OCI-LY7 (cell line): ENCODE measurements at regions of chr7 and their contacts with region 1.

Region 1: GRCh38 chr7:39948956-39949928 is 814 bp upstream of the CDK13 start:
- DNase-seq: peak; percentile 98
- H3K4me3 ChIP-seq: peak overlapping the region; percentile 97
- H3K27ac ChIP-seq: peak overlapping the region; percentile 100
- H3K4me1 ChIP-seq: peaks cover 27% of the 10 kb centered on the region
- CTCF ChIP-seq: no peak

Region 2: DNA sequence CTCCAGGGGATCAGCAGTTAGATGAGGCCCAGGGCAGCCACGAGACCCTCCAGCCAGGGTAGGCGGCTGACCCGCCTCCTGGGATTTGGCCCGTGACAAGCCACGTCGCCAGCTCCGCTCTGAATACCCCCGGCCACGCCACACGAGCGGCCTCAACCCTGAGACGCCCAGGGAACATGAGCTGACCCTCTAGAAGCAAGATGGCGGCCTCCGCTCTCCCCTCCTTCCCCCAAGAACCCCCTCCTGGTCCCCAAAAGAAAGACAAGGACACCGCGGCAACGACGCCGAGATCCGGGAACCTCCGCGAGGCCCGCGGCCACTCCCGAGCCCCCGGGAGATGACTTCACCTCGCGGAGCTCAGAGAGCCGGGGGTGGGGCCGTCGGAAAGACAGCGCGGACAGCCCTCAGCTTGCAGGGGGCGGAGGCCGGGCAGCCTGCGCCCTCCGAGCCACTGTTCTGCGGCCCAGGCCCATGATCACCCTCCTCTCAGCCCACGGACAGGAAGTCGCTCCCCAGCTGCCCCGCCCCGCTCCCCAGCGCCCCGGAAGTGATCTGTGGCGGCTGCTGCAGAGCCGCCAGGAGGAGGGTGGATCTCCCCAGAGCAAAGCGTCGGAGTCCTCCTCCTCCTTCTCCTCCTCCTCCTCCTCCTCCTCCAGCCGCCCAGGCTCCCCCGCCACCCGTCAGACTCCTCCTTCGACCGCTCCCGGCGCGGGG is 326.1 kb before region 1 on chr7 and contains the start of gene RALA:
- CTCF ChIA-PET with region 1: no interaction called
- POLR2A ChIA-PET with region 1: interaction called, 6 read pairs
- intact Hi-C with region 1: loop called (anchors 2 kb)
- DNase-seq: peak; percentile 87
- H3K4me3 ChIP-seq: peak within 1 kb of the TSS; percentile 86
- H3K27ac ChIP-seq: peak within 1 kb of the TSS; percentile 17
- H3K4me1 ChIP-seq: peaks cover 27% of the 10 kb centered on the region
- CTCF ChIP-seq: no peak
- total RNA-seq, gene RALA: 5.7 and 6.4 TPM in 2 replicates

Region 3: DNA sequence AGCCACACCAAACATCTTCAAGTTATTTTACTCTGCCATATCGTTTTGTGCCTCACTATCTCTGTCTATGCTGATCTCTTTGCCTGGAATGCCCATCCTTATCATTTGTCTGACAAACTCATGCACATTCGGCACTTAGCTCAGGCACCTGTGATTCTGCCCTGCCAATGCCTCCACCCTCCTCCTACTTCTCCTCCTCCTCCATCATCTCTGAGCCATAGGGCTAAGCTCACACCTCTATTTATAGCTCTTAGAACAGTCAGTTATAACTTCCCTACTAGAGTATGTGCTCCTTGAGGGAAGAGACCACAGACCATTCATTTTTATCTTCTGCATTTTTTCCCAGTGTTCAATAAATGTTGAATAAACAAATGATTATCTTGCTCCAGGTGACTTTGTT is 50.4 kb before region 1 on chr7:
- CTCF ChIA-PET with region 1: no interaction called
- POLR2A ChIA-PET with region 1: interaction called, 6 read pairs
- intact Hi-C with region 1: loop called (anchors 2 kb)
- DNase-seq: no peak
- H3K4me3 ChIP-seq: no peak overlapping the region
- H3K27ac ChIP-seq: no peak overlapping the region
- H3K4me1 ChIP-seq: no peaks in the 10 kb centered on the region
- CTCF ChIP-seq: no peak

Region 4: DNA sequence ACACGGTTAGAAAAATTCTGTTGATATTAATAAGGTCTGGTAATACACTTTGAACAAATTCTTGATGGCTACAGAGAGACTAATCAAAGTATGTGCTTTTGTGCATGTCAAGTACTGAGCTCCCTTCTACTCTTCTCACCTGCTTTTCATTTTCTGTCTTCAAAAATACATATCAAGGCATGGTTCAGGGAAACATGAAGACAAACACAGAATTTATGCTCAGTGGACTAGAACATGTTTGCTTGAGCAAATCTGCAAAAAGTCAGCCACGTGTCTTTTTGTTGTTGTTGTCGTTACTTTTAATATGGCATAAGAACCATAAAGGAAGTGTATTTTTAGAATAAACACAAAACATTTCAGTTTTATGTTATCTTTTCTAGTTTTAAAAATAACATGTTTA is 22.7 kb after region 1 on chr7:
- CTCF ChIA-PET with region 1: no interaction called
- POLR2A ChIA-PET with region 1: interaction called, 85 read pairs
- intact Hi-C with region 1: loop called (anchors 2 kb)
- DNase-seq: peak; percentile 79
- H3K4me3 ChIP-seq: peak overlapping the region; percentile 42
- H3K27ac ChIP-seq: peak overlapping the region; percentile 81
- H3K4me1 ChIP-seq: peaks cover 96% of the 10 kb centered on the region
- CTCF ChIP-seq: no peak

Region 5: GRCh38 chr7:40057292-40057691 is 108.0 kb after region 1 on chr7:
- CTCF ChIA-PET with region 1: interaction called, 3 read pairs
- POLR2A ChIA-PET with region 1: interaction called, 6 read pairs
- intact Hi-C with region 1: loop called (anchors 1 kb)
- DNase-seq: no peak
- H3K4me3 ChIP-seq: no peak overlapping the region
- H3K27ac ChIP-seq: no peak overlapping the region
- H3K4me1 ChIP-seq: no peaks in the 10 kb centered on the region
- CTCF ChIP-seq: no peak